Panc1 (cell line): ENCODE measurements at regions of chr3 and their contacts with region 1.

Region 1: GRCh38 chr3:55485211-55485791 is 1.8 kb downstream of the WNT5A start:
- DNase-seq: no peak
- ATAC-seq: peak; percentile 83
- H3K4me3 ChIP-seq: peak overlapping the region; percentile 57 to 77; a peak in 3 of 4 replicates
- H3K27ac ChIP-seq: no peak overlapping the region
- H3K4me1 ChIP-seq: peaks cover 6% of the 10 kb centered on the region; the same call in 1 of the 2 replicates
- H3K27me3 ChIP-seq: peaks cover 7% of the 10 kb centered on the region
- CTCF ChIP-seq: peak; percentile 82

Region 2: GRCh38 chr3:54649551-54649950 is 835.8 kb before region 1 on chr3:
- CTCF ChIA-PET with region 1: no interaction called
- POLR2A ChIA-PET with region 1: interaction called, 17 read pairs
- in situ Hi-C with region 1: no loop called
- intact Hi-C with region 1: no loop called
- DNase-seq: no peak
- ATAC-seq: no peak
- H3K4me3 ChIP-seq: no peak overlapping the region
- H3K27ac ChIP-seq: no peak overlapping the region
- H3K4me1 ChIP-seq: no peaks in the 10 kb centered on the region
- H3K27me3 ChIP-seq: no peaks in the 10 kb centered on the region
- CTCF ChIP-seq: no peak

Region 3: GRCh38 chr3:54863131-54863765 is 622.1 kb before region 1 on chr3:
- CTCF ChIA-PET with region 1: no interaction called
- POLR2A ChIA-PET with region 1: no interaction called
- in situ Hi-C with region 1: no loop called
- intact Hi-C with region 1: loop called (anchors 10 kb)
- DNase-seq: no peak
- ATAC-seq: no peak
- H3K4me3 ChIP-seq: no peak overlapping the region
- H3K27ac ChIP-seq: no peak overlapping the region
- H3K4me1 ChIP-seq: no peaks in the 10 kb centered on the region
- H3K27me3 ChIP-seq: no peaks in the 10 kb centered on the region
- CTCF ChIP-seq: no peak

Region 4: GRCh38 chr3:55467099-55467498 is 18.2 kb before region 1 on chr3:
- CTCF ChIA-PET with region 1: no interaction called
- POLR2A ChIA-PET with region 1: no interaction called
- in situ Hi-C with region 1: no loop called
- intact Hi-C with region 1: no loop called
- DNase-seq: no peak
- ATAC-seq: no peak
- H3K4me3 ChIP-seq: no peak overlapping the region
- H3K27ac ChIP-seq: no peak overlapping the region
- H3K4me1 ChIP-seq: no peaks in the 10 kb centered on the region
- H3K27me3 ChIP-seq: no peaks in the 10 kb centered on the region
- CTCF ChIP-seq: no peak

Region 5: DNA sequence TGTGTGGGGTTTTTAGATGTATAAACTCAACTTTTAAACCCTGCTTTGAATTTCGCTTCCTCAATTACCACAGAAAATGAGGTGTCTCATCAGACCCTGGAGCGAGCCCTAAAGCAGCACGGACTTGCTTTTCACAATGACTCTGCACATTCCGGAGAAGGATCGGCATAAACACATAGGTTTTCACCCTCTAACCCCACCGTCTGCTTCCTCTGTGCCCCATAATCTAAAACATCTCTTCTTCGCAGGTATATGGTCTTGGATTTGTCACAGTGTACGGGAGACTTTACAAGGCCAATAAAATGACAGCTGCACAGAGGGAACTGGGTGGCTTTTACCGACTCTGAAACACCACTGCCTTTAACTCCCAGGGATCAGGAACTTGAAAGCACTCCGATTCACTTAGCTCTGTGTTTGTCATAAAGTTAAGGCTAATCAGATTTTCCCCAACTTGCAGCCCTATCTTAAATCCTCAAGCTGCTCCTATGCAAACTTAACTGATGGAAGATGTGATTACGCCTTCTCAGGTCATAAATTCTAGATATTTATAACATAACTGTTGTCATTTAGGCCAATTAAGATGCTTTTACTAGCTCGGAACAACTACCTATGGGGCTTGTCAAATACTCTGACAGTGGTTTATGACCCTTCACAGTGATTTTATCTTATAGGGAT is 135.2 kb after region 1 on chr3:
- CTCF ChIA-PET with region 1: no interaction called
- POLR2A ChIA-PET with region 1: no interaction called
- in situ Hi-C with region 1: no loop called
- intact Hi-C with region 1: no loop called
- DNase-seq: no peak
- ATAC-seq: no peak
- H3K4me3 ChIP-seq: no peak overlapping the region
- H3K27ac ChIP-seq: no peak overlapping the region
- H3K4me1 ChIP-seq: no peaks in the 10 kb centered on the region
- H3K27me3 ChIP-seq: no peaks in the 10 kb centered on the region
- CTCF ChIP-seq: no peak

Region 6: GRCh38 chr3:55746808-55747413 is 261.6 kb after region 1 on chr3:
- CTCF ChIA-PET with region 1: no interaction called
- POLR2A ChIA-PET with region 1: no interaction called
- in situ Hi-C with region 1: no loop called
- intact Hi-C with region 1: loop called (anchors 5 kb)
- DNase-seq: no peak
- ATAC-seq: no peak
- H3K4me3 ChIP-seq: no peak overlapping the region
- H3K27ac ChIP-seq: no peak overlapping the region
- H3K4me1 ChIP-seq: no peaks in the 10 kb centered on the region
- H3K27me3 ChIP-seq: no peaks in the 10 kb centered on the region
- CTCF ChIP-seq: peak; percentile 49

Region 7: DNA sequence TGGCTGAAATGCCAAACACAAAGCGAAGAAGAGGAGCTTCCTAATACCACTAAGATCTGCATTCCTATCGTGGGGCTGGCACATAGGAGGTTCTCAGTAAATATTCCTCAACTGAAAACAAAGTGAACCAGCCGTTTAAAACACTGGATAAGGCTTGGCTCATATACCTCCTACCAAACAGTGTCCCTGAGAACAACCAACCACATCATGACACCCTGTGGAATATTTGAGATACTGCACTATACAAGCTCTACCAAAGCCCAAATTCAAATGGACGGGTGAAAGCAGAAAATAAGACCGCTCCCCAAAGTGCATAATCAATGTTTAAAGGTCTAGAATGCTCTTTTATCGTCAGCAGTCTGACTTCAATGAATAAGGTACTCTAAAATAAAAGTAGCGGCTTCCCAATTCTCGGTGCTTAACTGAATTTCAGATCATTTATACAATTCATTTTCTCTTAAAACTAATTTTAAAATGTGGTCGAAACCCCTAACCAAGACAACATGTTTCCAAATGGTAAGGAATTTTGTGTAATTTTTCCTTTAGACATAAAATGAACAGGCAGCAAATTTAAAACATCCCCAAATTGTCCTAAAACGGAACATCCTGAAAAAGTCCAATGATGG is 557.1 kb after region 1 on chr3:
- CTCF ChIA-PET with region 1: no interaction called
- POLR2A ChIA-PET with region 1: no interaction called
- in situ Hi-C with region 1: no loop called
- intact Hi-C with region 1: loop called (anchors 5 kb)
- DNase-seq: peak; percentile 13
- ATAC-seq: peak; percentile 82
- H3K4me3 ChIP-seq: no peak overlapping the region
- H3K27ac ChIP-seq: no peak overlapping the region
- H3K4me1 ChIP-seq: no peaks in the 10 kb centered on the region
- H3K27me3 ChIP-seq: peaks cover 2% of the 10 kb centered on the region; the same call in 1 of the 2 replicates
- CTCF ChIP-seq: peak; percentile 50

Region 8: DNA sequence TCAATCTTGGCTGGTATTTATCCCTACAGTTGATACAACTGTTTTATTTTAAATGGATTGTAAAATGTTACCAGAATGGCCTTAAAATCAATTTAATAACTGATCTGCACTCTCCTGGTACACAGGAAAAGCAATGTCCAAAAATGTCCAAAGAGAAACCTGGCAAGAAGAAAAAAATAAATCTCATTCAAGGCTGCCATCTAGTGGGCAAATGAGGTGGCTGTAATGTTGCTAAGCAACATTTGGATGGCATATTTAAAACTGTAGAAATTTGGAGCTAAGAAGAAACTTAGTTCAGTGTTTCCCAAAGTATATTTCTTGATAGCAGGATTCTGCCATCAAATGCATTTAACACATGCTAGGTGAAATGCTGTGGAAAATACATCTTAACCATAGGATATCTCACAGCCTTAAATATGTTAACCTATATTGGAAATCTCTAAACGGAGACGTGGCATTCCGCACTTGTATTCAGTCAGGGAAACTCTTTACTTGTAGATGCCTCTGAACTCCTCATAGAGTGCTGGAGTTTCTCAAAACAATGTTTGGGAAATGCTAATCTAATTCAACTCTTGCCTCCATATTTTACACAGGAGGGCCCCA is 766.1 kb after region 1 on chr3:
- CTCF ChIA-PET with region 1: no interaction called
- POLR2A ChIA-PET with region 1: no interaction called
- in situ Hi-C with region 1: no loop called
- intact Hi-C with region 1: loop called (anchors 5 kb)
- DNase-seq: peak; percentile 18
- ATAC-seq: 0 out of 2 replicates have a peak, but pooled peaks have one; percentile 38
- H3K4me3 ChIP-seq: no peak overlapping the region
- H3K27ac ChIP-seq: no peak overlapping the region
- H3K4me1 ChIP-seq: no peaks in the 10 kb centered on the region
- H3K27me3 ChIP-seq: no peaks in the 10 kb centered on the region
- CTCF ChIP-seq: peak; percentile 69; the same call in 1 of the 2 replicates